Panc1 (cell line): ENCODE measurements at regions of chr1 and their contacts with region 1.

Region 1: GRCh38 chr1:165288350-165289148 is 68.0 kb downstream of the LMX1A start:
- DNase-seq: no peak
- ATAC-seq: no peak
- H3K4me3 ChIP-seq: no peak overlapping the region
- H3K27ac ChIP-seq: no peak overlapping the region
- H3K4me1 ChIP-seq: no peaks in the 10 kb centered on the region
- H3K27me3 ChIP-seq: no peaks in the 10 kb centered on the region
- CTCF ChIP-seq: no peak

Region 2: DNA sequence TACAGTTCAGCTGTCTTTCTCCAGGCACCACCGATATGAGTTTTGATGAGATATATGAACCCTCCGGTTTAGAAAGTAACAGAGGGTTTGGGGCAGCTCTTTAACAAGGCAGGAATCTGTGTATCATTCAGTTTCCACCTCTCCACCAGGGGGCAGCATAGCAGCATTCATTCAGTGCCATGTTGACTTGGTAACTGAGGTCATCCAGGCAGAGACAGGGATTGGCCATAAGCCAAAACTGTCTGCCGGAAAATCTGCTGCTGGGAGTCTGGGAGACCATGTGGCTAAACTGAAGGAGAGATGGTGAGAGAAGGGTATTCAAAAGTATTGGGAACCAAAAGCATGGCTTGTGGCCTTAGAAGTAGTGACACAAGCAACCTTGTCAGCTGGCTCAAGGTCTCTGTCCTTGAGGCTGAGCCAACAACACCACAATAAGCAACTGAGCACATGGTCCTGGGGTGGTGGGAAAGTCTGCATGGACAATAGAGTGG is 30.5 kb before region 1 on chr1:
- CTCF ChIA-PET with region 1: no interaction called
- POLR2A ChIA-PET with region 1: interaction called, 14 read pairs
- in situ Hi-C with region 1: no loop called
- intact Hi-C with region 1: no loop called
- DNase-seq: peak; percentile 20
- ATAC-seq: no peak; the same call in 1 of the 2 replicates
- H3K4me3 ChIP-seq: no peak overlapping the region
- H3K27ac ChIP-seq: no peak overlapping the region
- H3K4me1 ChIP-seq: no peaks in the 10 kb centered on the region
- H3K27me3 ChIP-seq: 0 out of 2 replicates have a peak, but pooled peaks cover 3% of the 10 kb centered on the region
- CTCF ChIP-seq: peak; percentile 76

Region 3: DNA sequence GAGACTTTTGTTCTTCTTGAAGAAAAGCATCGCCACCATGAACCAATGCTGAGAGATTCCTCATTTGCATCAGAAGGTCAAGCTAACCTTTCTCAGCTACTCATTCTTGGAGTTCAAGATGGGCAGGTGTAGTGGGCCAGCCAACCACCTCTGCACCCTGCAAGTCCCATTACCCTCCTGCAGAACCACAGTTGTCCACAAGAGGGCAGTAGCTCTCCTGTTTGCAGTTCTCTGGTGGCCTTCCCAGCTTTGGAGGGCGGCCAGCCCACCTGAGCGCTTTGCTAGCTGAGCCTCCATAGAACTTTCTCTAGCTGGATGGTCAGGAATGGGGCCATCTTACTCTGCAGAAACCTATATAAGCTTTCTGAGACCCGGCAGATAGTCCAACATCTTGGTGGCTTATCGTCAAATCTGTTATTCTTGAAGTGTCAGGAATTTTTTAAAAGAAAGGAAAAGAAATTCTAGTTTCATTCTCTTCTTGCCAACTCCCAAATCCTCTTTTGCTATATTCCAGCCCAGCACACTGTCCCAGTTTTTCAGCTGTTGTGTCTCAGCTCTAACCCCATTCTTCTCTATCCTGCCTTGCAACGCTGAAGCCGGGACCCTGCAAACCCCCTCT is 78.9 kb after region 1 on chr1:
- CTCF ChIA-PET with region 1: no interaction called
- POLR2A ChIA-PET with region 1: no interaction called
- in situ Hi-C with region 1: no loop called
- intact Hi-C with region 1: no loop called
- DNase-seq: peak; percentile 53
- ATAC-seq: peak; percentile 77; the same call in 1 of the 2 replicates
- H3K4me3 ChIP-seq: no peak overlapping the region
- H3K27ac ChIP-seq: no peak overlapping the region
- H3K4me1 ChIP-seq: no peaks in the 10 kb centered on the region
- H3K27me3 ChIP-seq: peaks cover 8% of the 10 kb centered on the region; the same call in 1 of the 2 replicates
- CTCF ChIP-seq: peak; percentile 95